Activated CD4-positive, alpha-beta T cell treated with anti-CD3 and anti-CD28 coated beads, Interleukin-2, amount 10 ng/mL, durations not matched to agents 24 days and 14 days (primary cell): ENCODE measurements at regions of chr1 and their contacts with region 1.

Region 1: DNA sequence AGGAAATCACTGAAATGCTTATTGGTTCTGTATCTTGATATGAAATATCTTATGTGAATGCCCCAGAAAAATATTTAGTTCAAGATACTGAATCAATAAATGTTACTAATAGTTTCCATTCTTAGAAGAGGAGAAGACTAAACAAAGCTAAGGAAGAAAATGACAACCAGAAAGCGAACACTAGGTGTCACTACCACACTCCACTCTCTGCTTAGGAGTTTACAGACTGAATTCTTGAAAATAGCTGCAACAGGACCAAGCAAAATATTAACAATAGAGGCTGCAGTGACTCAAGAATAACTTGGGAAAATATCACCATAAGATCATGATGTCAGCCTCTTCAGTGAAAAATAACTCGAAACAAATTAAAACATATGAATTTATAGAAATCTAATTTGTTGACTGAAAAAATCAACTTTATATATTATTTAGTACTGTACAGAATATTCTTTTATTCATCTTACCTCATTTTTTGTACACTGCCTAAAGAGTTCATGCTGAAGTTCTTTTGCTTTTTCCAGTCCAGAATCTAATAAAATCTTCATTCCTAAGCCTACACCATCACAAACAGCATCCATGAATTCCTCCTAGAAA is 61.6 kb downstream of the KIF14 start:
- DNase-seq: peak; percentile 67
- H3K4me3 Mint-ChIP-seq: no peak overlapping the region
- H3K27ac Mint-ChIP-seq: no peak overlapping the region
- H3K4me1 Mint-ChIP-seq: peaks cover 12% of the 10 kb centered on the region
- H3K27me3 Mint-ChIP-seq: no peaks in the 10 kb centered on the region

Region 2: GRCh38 chr1:200302192-200302920 is 256.6 kb before region 1 on chr1:
- intact Hi-C with region 1: no loop called
- DNase-seq: peak; percentile 90
- H3K4me3 Mint-ChIP-seq: peak overlapping the region; percentile 86
- H3K27ac Mint-ChIP-seq: peak overlapping the region; percentile 17
- H3K4me1 Mint-ChIP-seq: peaks cover 20% of the 10 kb centered on the region
- H3K27me3 Mint-ChIP-seq: peaks cover 38% of the 10 kb centered on the region

Region 3: GRCh38 chr1:200802865-200803512 is 244.0 kb after region 1 on chr1:
- intact Hi-C with region 1: loop called (anchors 1 kb)
- DNase-seq: peak; percentile 91
- H3K4me3 Mint-ChIP-seq: no peak overlapping the region
- H3K27ac Mint-ChIP-seq: no peak overlapping the region
- H3K4me1 Mint-ChIP-seq: peaks cover 2% of the 10 kb centered on the region
- H3K27me3 Mint-ChIP-seq: peaks cover 20% of the 10 kb centered on the region

Region 4: DNA sequence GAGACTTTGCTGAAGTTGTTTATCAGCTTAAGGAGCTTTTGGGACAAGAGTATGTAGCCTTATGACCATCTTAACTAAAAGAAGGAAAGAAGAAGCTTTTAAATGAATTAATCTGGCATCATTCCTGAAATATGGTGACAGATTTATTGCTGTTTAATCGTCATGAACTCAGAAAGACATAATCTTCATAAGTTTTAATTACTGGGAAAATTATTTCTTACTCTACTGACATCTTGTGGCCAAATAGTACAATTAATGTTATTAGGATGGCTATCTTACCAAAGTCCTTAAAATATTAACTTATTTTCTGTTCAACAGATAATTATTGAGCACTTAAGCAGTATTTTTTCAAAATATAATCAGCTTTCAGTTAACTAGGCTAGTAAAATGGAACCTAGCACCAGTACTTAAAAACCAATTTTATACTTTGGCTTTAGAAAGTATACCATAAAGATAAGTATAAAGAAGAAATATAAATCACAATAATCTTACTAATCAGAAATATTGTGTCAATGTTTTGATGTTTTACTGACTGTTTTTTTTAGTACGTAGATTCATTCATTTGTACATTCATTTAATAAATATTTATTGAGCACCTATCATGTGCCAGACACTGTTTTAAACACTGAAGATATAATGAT is 279.1 kb after region 1 on chr1:
- intact Hi-C with region 1: loop called (anchors 5 kb)
- DNase-seq: no peak
- H3K4me3 Mint-ChIP-seq: no peak overlapping the region
- H3K27ac Mint-ChIP-seq: no peak overlapping the region
- H3K4me1 Mint-ChIP-seq: no peaks in the 10 kb centered on the region
- H3K27me3 Mint-ChIP-seq: no peaks in the 10 kb centered on the region

Region 5: DNA sequence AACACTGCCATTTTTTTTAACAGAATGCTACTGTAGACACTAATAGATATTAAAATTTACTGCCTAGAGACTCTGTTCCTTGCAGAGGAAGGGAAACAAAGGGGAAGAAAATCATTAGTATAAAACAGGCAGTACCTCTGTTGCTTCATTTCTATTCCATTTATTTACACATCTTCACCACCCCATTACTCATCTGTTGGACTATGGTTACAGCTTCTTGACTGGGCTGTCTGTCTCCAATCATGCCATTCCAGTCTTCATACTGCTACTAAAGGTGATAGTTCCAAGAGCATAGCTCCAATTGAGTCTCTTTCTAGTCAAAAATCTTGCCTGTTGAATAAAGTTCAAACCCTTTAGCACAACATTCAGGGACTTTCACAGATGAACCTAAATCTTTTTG is 291.6 kb after region 1 on chr1:
- intact Hi-C with region 1: no loop called
- DNase-seq: no peak
- H3K4me3 Mint-ChIP-seq: no peak overlapping the region
- H3K27ac Mint-ChIP-seq: no peak overlapping the region
- H3K4me1 Mint-ChIP-seq: no peaks in the 10 kb centered on the region
- H3K27me3 Mint-ChIP-seq: peaks cover 28% of the 10 kb centered on the region